ENCODE measurements at regions of chr17 and their contacts with region 1.

Region 1: GRCh38 chr17:34261568-34262337 is 6.7 kb downstream of the CCL2 start:
- H3K4me3 Mint-ChIP-seq: no peak overlapping the region
- H3K27ac Mint-ChIP-seq: no peak overlapping the region
- H3K4me1 Mint-ChIP-seq: peaks cover 57% of the 10 kb centered on the region
- H3K27me3 Mint-ChIP-seq: peaks cover 30% of the 10 kb centered on the region

Region 2: DNA sequence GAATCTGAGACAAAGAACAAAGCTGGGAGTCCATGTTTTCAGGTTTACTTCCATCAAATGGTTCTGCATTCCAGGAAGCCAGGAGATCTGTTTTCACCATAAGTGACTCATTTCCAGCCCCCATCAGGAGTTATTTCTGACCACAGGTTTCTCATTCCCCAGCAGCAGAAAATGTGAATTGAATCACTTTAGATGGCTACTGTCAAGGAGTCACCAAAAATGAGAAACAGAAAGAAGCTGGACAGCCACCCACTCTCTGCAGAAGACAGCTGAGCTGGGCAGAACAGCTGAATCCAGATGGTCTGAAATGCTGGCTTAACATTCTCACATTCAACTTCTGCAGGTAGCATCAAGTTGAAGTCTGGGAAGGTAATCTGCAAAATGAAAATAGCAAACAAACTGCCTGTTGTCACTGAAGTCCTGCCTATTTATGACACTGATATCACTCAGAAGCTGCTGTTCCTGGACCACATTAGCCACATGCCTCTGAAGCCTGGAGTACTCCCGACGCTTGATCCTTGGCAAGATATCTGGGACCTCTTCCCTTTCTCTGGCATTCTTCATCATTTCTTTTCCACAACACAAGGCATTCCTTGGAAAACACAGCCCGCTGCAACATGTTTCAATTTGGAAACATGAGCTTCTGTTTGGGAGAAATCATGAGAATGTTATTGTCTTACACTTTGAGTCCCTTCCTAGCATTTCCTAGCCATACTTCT is 39.1 kb after region 1 on chr17:
- intact Hi-C with region 1: loop called (anchors 5 kb)
- H3K4me3 Mint-ChIP-seq: no peak overlapping the region
- H3K27ac Mint-ChIP-seq: peak overlapping the region; percentile 25
- H3K4me1 Mint-ChIP-seq: peaks cover 77% of the 10 kb centered on the region
- H3K27me3 Mint-ChIP-seq: peaks cover 18% of the 10 kb centered on the region

Measured in dendritic cell treated with granulocyte-macrophage colony-stimulating factor and Interleukin-4, amounts not matched to agents 40 ng/mL and 50 ng/mL, for 4 days (primary cell).